ENCODE measurements at regions of chr15 and their contacts with region 1.

Region 1: DNA sequence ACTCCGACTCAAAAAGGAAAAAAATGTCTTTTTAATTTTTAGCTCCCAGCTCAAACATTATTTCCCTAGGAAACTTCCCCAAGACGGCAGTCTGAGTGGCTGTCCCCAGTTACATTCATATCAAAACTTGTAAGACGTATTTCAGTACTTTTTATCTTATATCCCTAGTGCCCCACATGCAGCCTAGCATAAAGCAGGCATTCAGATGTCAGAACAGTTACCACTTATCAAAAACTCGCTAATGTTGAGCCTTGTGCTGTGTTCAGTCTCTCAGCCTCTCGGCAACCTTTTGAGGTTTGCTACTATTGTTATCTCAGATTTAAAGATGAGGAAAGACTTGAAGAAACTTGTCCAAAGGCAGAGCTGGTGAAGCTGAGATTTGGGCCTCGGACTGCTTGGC is 6.6 kb upstream of the SELENOS start:
- DNase-seq: no peak
- ATAC-seq: no peak
- H3K4me3 Mint-ChIP-seq: no peak overlapping the region
- H3K27ac Mint-ChIP-seq: no peak overlapping the region
- H3K4me1 Mint-ChIP-seq: peaks cover 26% of the 10 kb centered on the region
- H3K27me3 Mint-ChIP-seq: no peaks in the 10 kb centered on the region

Region 2: DNA sequence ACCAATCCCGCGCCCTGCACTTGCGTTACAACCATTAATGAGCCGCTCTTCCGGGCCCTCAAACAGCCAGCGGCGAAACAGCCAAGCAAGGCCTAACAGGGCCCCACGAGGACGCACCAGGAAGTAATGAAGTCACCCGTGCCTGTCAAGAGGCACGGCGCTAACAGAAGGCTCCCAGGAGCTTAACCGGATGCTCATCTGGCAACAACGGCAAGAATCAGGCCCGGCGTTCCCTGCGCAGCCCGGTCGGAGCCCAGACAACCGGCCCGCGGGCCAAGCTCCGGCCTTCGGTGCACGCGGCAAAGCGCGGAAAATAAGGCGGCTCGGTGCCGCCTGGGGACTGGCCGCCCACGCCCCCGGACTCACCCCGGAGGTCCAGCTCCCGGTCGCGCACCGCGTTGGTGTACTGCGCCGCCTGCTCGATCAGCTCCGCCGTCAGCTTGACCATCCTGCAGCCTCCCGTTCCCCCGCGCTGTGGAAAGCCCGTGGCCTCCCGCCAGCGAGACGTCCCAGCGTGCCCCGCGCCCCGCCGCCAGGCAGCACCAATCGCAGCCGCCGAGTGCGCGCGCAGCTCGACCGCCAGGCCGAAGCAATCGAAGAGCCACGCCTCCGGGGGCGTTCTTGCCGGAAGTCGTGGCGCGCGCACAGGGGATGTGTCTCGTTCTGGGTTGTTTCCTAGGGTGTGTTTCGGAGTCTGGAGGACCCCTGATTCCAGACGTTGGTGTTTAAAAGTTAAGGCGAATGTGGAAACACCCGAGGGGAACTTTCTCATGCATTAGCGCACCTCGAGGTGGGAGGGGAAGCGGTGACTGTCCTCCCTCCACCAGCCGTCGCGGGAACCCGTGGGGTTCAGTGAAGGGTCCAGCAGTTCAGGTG is 11.0 kb after region 1 on chr15 and contains the start of gene SNRPA1:
- CTCF ChIA-PET with region 1: interaction called, 13 read pairs
- POLR2A ChIA-PET with region 1: interaction called, 30 read pairs
- DNase-seq: peak; percentile 97
- ATAC-seq: peak; percentile 87
- H3K4me3 Mint-ChIP-seq: peak within 1 kb of the TSS; percentile 98
- H3K27ac Mint-ChIP-seq: peak within 1 kb of the TSS; percentile 93
- H3K4me1 Mint-ChIP-seq: peaks cover 37% of the 10 kb centered on the region
- H3K27me3 Mint-ChIP-seq: no peaks in the 10 kb centered on the region
- total RNA-seq, gene SNRPA1: 138 to 144 TPM

Measured in activated CD8-positive, alpha-beta T cell treated with anti-CD3 and anti-CD28 coated beads, Interleukin-2, amount 10 ng/mL, durations not matched to agents 7 days and 5 days (primary cell).